PC-3 (cell line): ENCODE measurements at regions of chr2 and their contacts with region 1.

Region 1: DNA sequence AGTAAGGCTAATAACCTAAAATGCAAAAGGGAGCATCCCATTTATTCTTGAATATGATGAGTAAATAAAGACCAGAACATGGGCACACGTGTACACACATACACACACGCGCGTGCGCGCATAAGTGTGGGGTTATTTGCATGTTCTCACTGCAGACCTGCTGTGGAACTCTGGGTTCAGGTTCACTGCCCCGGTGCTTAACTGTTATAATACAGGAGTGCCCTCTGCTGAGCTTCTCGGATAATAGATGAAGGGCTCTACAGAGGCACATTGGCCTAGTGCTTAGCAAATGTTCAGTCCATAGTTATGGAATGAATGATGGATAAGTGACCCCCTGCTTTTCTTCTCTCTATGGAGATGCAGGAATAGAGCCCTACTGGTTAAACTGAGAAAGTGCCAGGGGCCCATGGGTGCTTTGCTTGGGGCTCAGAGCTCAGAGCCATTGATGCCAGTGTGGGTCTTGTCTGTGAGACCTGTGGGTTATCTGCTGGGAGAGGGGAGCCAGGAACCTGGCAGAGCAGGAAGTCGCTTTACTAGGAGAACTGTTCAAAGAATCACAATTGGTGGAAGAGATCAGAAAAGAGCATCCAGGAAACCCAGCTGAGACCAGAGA is 3.6 kb upstream of the ARL4C start:
- DNase-seq: peak; percentile 66
- ATAC-seq: peak; percentile 23; the same call in 1 of the 2 replicates
- H3K4me3 ChIP-seq: no peak overlapping the region
- H3K27ac ChIP-seq: no peak overlapping the region
- H3K4me1 ChIP-seq: peaks cover 16% of the 10 kb centered on the region
- H3K27me3 ChIP-seq: no peaks in the 10 kb centered on the region
- CTCF ChIP-seq: peak; percentile 82

Region 2: GRCh38 chr2:234251326-234252271 is 248.9 kb before region 1 on chr2:
- CTCF ChIA-PET with region 1: no interaction called
- POLR2A ChIA-PET with region 1: interaction called, 11 read pairs
- intact Hi-C with region 1: loop called (anchors 1 kb)
- DNase-seq: peak; percentile 97
- ATAC-seq: peak; percentile 74
- H3K4me3 ChIP-seq: peak overlapping the region; percentile 7; the same call in 1 of the 2 replicates
- H3K27ac ChIP-seq: peak overlapping the region; percentile 91
- H3K4me1 ChIP-seq: peaks cover 60% of the 10 kb centered on the region
- H3K27me3 ChIP-seq: no peaks in the 10 kb centered on the region
- CTCF ChIP-seq: no peak

Region 3: DNA sequence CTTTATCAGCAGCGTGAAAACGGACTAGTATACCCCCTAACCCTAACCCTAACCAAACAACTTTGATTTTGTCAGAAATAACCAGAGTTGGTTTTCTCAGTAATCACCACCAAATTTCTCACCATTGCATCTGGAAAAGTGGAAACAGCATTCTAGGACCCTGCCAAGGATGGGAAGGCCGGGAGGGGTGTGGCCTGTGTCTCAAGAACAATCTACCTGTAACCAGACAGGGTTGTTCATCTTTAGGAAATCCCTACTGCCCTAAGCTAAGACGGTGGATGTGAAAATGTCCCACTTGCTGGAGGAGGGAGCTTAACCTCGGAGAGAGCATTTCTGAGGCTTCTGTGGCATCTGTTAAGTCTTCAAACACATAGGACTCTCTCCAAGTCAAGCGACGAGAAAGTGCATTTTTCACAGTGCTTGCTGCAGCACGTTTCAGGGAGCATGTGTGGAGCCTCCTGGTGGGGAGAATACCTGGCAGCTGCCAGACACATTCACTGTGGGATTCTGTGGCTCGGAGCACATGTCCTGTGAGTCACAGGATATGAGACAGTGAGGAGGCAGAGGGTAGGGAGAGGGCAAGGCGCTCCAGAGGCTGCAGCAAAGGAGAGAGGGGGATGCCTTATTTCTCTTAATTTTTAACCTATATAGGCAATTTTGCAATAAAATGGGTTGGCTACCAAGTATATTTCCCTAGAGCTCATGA is 242.5 kb before region 1 on chr2:
- CTCF ChIA-PET with region 1: no interaction called
- POLR2A ChIA-PET with region 1: no interaction called
- intact Hi-C with region 1: loop called (anchors 2 kb)
- DNase-seq: peak; percentile 97
- ATAC-seq: peak; percentile 99
- H3K4me3 ChIP-seq: peak overlapping the region; percentile 22; the same call in 1 of the 2 replicates
- H3K27ac ChIP-seq: peak overlapping the region; percentile 97
- H3K4me1 ChIP-seq: peaks cover 41% of the 10 kb centered on the region
- H3K27me3 ChIP-seq: no peaks in the 10 kb centered on the region
- CTCF ChIP-seq: peak; percentile 80

Region 4: GRCh38 chr2:234288974-234289455 is 211.5 kb before region 1 on chr2:
- CTCF ChIA-PET with region 1: interaction called, 3 read pairs
- POLR2A ChIA-PET with region 1: no interaction called
- intact Hi-C with region 1: loop called (anchors 1 kb)
- DNase-seq: peak; percentile 58
- ATAC-seq: 0 out of 2 replicates have a peak, but pooled peaks have one; percentile 13
- H3K4me3 ChIP-seq: no peak overlapping the region
- H3K27ac ChIP-seq: peak overlapping the region; percentile 11
- H3K4me1 ChIP-seq: peaks cover 12% of the 10 kb centered on the region; the same call in 1 of the 2 replicates
- H3K27me3 ChIP-seq: no peaks in the 10 kb centered on the region
- CTCF ChIP-seq: peak; percentile 75

Region 5: DNA sequence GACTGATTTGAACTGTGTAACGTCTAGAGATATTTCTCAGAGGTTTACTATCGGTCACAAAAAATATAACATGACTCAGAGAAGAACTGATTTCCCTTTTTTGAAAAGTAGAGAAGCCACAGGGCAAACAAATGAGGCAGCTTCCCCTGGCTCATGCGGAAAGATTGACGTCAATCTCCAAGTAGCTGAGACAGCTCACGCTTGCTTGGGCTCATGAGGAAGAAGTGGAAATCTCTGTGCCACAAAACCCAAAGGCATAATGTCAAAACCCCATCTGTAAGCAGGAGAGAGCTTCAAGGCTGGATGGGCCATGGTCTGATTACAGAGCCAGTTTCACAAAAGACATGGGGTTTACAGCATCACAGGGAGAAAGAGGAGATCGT is 191.7 kb before region 1 on chr2:
- CTCF ChIA-PET with region 1: no interaction called
- POLR2A ChIA-PET with region 1: interaction called, 6 read pairs
- intact Hi-C with region 1: loop called (anchors 5 kb)
- DNase-seq: peak; percentile 92
- ATAC-seq: peak; percentile 90
- H3K4me3 ChIP-seq: no peak overlapping the region
- H3K27ac ChIP-seq: peak overlapping the region; percentile 98
- H3K4me1 ChIP-seq: peaks cover 40% of the 10 kb centered on the region
- H3K27me3 ChIP-seq: no peaks in the 10 kb centered on the region
- CTCF ChIP-seq: no peak

Region 6: GRCh38 chr2:234363011-234363487 is 137.5 kb before region 1 on chr2:
- CTCF ChIA-PET with region 1: no interaction called
- POLR2A ChIA-PET with region 1: no interaction called
- intact Hi-C with region 1: loop called (anchors 2 kb)
- DNase-seq: peak; percentile 95
- ATAC-seq: peak; percentile 92
- H3K4me3 ChIP-seq: peak overlapping the region; percentile 40
- H3K27ac ChIP-seq: peak overlapping the region; percentile 90
- H3K4me1 ChIP-seq: peaks cover 57% of the 10 kb centered on the region
- H3K27me3 ChIP-seq: no peaks in the 10 kb centered on the region
- CTCF ChIP-seq: no peak